Tibial artery (tissue), 4 donors: ENCODE measurements at regions of chr6 and their contacts with region 1.

Region 1: DNA sequence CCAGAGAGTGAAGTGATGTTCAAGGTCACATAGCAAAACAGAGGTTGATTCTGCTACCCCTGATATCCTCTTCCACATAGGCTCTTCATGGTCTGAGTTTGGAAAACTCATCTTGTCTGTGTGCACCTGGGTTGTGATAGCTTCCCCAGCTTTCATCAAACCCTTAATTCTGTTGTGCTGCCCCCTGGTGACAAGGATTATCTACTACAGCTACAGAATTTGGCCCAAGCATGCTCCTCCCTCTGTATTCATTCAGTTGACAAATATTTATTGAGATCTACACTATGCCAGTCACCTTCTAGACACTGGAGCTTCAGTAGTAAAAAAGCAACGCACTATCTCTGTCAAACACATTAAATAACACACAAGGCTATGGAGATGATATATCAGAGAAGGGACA is 50.4 kb downstream of the SMPDL3A start:
- DNase-seq: peak in 1 of 2 donors; percentile 38
- H3K4me3 ChIP-seq: no peak overlapping the region
- H3K27ac ChIP-seq: no peak overlapping the region
- H3K4me1 ChIP-seq: no peaks in the 10 kb centered on the region
- H3K27me3 ChIP-seq: no peaks in the 10 kb centered on the region
- CTCF ChIP-seq: peak; percentile 56 to 58

Region 2: GRCh38 chr6:122730775-122731386 is 108.6 kb before region 1 on chr6:
- intact Hi-C with region 1: loop called (anchors 5 kb)
- DNase-seq: no peak
- H3K4me3 ChIP-seq: no peak overlapping the region
- H3K27ac ChIP-seq: no peak overlapping the region
- H3K4me1 ChIP-seq: no peaks in the 10 kb centered on the region
- H3K27me3 ChIP-seq: peaks cover 0 to 4% of the 10 kb centered on the region in 2 donors
- CTCF ChIP-seq: peak; percentile 66 to 79